ENCODE measurements at regions of chr3 and their contacts with region 1.

Region 1: DNA sequence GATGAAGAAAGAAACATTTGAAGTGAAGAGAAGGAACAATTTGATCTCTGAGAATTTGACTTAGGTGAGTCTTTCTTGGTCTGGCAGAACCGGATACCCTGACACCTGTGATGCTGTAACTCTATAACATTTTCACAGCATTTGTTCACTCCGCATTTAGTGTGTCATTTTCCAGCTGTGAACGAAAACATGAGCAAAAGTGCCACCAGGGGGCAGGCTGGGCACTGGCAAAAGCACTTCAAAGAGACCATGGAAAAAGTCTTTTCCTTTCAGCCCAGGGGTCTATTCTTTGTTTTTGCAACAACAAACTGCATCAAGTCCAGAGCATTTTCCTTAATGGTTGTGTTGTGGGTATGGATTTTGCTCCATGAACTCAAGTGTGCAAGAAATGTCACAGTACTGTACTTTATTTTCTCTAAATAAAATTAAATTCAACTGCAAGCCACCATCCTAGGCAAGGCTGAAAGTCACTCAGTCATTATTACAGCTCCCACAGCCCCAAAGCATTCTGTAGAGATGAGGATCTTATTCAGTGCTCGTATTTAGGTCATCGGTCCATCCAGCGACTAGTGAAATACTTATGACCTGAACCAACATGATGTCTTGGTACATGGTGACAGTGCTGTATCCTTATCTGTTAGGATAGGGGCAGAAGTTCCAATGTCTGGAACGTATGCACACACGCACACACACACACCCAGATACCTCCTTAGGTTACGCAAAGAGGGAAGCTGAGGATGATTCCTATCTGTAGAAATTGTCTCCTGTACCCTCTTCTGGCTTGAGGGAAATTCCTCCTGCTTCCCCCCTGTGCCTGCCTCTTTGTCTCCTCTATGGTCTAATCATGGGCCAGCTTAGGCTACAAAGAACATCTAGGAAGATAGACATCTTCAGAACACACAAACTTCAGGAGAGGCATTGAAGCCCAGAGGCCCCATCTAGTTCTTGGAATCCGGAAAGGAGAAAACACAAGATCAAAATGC is 125.5 kb downstream of the GADL1 start:
- DNase-seq: peak; percentile 82
- ATAC-seq: peak; percentile 60

Region 2: GRCh38 chr3:30658328-30659052 is 110.5 kb before region 1 on chr3:
- intact Hi-C with region 1: no loop called
- DNase-seq: no peak
- ATAC-seq: peak; percentile 59

Region 3: DNA sequence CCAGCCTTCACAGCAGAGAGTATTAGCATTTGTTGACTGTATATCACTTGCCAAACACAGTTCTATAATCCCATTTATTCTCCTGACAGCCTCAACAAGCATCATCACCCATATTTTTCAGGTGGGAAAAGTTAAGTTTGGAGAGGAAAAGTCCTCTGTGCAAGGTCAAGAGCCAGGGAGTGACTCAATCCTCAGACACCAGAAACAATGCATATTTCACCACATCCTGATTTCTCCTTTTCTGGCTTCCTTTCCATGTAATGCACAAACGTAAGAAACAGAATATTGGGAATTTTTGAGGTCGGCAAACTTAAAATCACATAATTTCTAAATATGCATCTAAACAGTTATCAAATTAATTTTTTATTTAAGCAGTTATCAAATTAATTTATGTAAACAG is 241.5 kb after region 1 on chr3:
- intact Hi-C with region 1: loop called (anchors 5 kb)
- DNase-seq: no peak
- ATAC-seq: no peak

Region 4: DNA sequence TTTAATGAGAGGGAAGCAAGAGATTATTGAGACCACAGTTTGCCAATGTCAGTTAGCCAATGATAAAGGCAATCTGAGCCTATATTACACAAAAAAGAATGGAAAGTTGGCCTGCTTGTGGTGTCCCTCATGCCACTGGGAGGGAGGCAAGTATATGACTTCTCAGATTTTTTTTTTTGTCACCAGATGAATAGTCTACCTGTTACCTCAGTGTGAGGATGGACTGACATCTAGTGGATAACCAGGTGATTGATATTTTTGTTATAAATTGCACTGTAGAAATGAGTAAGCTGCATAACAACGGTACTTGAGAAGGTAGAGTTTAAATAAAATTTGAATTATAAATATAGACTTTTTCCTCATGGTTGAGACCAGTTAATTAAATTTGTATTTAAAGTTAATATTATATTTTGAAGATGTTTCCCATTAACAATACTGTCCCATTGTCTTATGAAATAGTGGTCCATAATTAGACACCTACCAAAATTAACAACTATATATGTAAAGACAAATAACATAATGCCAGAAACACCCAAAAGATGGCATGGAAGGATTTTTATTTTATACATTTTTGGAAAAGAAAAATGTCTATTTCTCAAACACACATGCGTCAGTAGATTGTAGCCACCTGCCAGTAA is 363.3 kb after region 1 on chr3:
- intact Hi-C with region 1: loop called (anchors 5 kb)
- DNase-seq: no peak
- ATAC-seq: no peak